Activated naive CD4-positive, alpha-beta T cell treated with anti-CD3 and anti-CD28 coated beads for 36 hours (primary cell): ENCODE measurements at regions of chr11 and their contacts with region 1.

Region 1: GRCh38 chr11:798093-798713 is at the start of gene SLC25A22:
- DNase-seq: peak; percentile 82
- H3K4me3 Mint-ChIP-seq: peak within 1 kb of the TSS; percentile 86
- H3K27ac Mint-ChIP-seq: peak within 1 kb of the TSS; percentile 37
- H3K4me1 Mint-ChIP-seq: peaks cover 15% of the 10 kb centered on the region
- H3K27me3 Mint-ChIP-seq: no peaks in the 10 kb centered on the region
- total RNA-seq, gene SLC25A22: 19.1 to 21.8 TPM

Region 2: GRCh38 chr11:313787-314547 is 484.2 kb before region 1 on chr11 and contains the start of gene IFITM1:
- CTCF ChIA-PET with region 1: no interaction called
- intact Hi-C with region 1: loop called (anchors 10 kb)
- DNase-seq: peak; percentile 77
- H3K4me3 Mint-ChIP-seq: peak within 1 kb of the TSS; percentile 93
- H3K27ac Mint-ChIP-seq: peak within 1 kb of the TSS; percentile 95
- H3K4me1 Mint-ChIP-seq: peaks cover 22% of the 10 kb centered on the region
- H3K27me3 Mint-ChIP-seq: no peaks in the 10 kb centered on the region
- total RNA-seq, gene IFITM1: 359 to 378 TPM

Region 3: DNA sequence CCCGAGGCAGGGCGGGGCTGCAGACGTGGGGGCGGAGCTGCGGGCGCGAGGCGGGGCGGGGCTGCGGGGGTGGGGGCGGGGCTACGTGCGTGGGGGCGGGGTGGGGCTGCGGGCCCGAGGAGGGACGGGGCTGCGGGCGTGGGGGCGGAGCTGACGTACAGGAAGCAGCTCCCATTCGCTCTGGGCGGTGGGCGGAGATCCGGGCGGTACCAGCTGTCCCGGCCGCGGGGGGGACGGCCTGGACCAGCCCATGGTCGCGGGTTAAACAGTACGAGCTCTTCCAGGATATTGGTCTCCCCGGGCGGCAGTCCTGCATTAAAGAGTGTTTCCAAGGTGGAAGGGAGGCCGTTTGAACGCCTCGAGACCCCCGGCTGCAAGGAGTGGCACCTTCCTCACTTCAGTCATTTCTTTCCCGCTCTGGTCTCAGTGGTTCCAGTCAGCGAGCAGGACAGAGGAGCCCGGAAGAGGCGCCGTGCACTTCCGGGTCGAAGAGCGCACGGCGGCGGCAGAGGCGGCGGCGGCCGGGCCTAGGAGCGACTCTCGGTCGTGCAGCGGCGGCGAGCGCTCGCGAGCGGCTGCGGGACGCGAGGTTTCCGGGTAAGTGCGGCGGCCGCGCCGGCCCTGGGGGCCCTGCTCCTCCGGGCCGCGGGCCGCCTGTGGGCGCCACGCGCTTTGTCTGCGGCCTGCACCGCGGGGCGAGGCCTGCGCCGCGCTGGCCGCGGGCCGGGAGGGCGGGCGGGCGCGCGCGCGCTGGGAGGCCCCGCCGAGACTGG is 222.0 kb before region 1 on chr11 and contains the start of gene PHRF1:
- CTCF ChIA-PET with region 1: no interaction called
- intact Hi-C with region 1: loop called (anchors 5 kb)
- DNase-seq: peak; percentile 96
- H3K4me3 Mint-ChIP-seq: peak within 1 kb of the TSS; percentile 88
- H3K27ac Mint-ChIP-seq: peak within 1 kb of the TSS; percentile 99
- H3K4me1 Mint-ChIP-seq: peaks cover 48% of the 10 kb centered on the region
- H3K27me3 Mint-ChIP-seq: peaks cover 6% of the 10 kb centered on the region
- total RNA-seq, gene PHRF1: 25.6 to 26.1 TPM

Region 4: DNA sequence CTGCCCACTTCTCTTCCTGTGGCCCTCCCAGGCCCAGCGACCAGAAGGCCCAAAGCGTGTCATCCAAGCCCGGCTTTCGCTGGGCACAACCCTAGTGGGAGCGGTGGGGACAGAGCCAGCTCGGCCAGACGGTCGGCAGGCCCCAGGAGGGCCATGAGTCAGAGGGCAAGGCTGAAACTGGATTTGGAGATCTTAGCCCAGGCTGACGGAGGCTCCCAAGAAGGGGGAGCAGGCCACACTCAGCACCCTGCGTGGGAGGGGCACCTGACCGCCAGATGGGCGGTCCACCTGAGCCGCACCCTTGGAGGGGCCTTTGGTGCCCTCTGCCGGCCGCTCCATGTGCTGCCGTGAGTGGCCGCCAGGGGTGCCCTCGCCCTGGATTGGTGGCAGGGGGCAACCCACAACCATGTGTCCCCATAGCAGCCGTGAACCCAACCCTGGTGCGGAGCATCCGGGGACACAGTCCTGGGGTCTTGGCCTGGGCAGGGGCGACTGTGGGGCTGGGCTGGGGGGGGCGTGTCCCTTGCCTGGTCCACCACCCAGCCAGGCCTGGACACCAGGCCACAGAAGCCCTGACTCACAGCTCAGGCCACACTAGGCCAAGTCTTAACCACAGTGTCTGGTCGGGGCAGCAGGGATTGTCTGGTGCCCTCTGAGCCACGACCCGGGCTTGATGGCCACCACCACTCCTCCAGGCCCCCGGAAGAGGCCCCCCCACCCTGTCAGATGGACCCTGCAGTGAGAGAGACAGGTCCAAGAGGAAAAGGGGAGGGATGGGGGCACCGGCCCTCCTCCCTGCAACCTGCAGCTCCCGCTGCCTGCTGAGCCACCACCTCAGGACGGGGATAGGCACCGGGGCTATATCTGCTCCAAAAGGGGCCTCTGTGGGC is 70.1 kb before region 1 on chr11:
- CTCF ChIA-PET with region 1: no interaction called
- intact Hi-C with region 1: loop called (anchors 1 kb)
- DNase-seq: peak; percentile 84
- H3K4me3 Mint-ChIP-seq: no peak overlapping the region
- H3K27ac Mint-ChIP-seq: no peak overlapping the region
- H3K4me1 Mint-ChIP-seq: peaks cover 5% of the 10 kb centered on the region
- H3K27me3 Mint-ChIP-seq: peaks cover 2% of the 10 kb centered on the region

Region 5: DNA sequence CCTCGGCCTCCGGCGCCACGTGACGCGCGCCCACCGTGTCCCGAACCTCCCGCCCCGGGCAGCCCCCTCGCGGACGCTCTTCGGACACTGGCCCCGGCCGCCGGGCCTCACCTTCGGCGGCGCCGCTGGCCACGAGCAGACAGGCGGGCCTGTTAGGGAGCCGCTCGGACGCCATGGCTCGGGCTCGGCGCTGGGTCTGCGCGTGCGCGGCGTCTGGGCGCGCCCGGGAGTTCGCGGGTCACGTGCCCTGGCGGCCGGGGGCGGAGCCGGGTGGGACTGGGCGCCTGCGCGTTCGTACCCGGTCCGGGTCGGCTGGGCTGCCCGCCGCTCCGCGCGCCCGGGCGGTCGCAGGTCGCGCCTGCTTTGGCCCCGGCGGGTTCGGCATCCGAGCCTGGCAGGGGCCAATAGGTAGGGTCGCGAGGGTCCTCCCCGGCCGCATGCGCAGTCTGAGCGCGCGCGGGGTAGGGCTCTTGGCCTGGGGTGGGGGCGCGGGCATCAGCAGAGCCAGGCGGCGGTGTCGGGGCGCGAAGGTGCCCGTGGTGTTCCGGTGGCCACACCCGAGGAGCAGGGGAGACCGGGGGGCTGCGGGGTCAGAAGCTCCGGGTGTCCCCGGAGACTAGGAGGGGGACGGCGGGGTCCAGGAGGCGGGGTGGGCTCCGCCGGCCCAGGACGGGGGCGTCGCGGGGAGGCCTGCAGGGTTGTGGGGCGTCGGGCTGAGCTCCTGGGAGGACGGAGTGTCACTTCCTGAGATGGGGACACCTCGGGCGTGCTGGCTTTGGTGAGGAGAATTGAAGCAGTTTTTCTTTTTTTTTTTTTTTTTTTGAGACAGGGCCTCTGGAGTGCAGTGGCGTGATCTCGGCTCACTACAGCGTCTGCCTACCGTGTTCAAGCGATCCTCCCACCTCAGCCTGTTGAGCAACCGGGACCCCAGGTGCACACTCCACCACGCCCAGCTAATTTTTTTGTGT is 20.6 kb before region 1 on chr11 and contains the start of gene GATD1:
- CTCF ChIA-PET with region 1: interaction called, 3 read pairs
- intact Hi-C with region 1: loop called (anchors 1 kb)
- DNase-seq: peak; percentile 93
- H3K4me3 Mint-ChIP-seq: peak within 1 kb of the TSS; percentile 87
- H3K27ac Mint-ChIP-seq: peak within 1 kb of the TSS; percentile 74
- H3K4me1 Mint-ChIP-seq: peaks cover 30% of the 10 kb centered on the region
- H3K27me3 Mint-ChIP-seq: no peaks in the 10 kb centered on the region
- total RNA-seq, gene GATD1: 33.0 to 34.3 TPM

Region 6: DNA sequence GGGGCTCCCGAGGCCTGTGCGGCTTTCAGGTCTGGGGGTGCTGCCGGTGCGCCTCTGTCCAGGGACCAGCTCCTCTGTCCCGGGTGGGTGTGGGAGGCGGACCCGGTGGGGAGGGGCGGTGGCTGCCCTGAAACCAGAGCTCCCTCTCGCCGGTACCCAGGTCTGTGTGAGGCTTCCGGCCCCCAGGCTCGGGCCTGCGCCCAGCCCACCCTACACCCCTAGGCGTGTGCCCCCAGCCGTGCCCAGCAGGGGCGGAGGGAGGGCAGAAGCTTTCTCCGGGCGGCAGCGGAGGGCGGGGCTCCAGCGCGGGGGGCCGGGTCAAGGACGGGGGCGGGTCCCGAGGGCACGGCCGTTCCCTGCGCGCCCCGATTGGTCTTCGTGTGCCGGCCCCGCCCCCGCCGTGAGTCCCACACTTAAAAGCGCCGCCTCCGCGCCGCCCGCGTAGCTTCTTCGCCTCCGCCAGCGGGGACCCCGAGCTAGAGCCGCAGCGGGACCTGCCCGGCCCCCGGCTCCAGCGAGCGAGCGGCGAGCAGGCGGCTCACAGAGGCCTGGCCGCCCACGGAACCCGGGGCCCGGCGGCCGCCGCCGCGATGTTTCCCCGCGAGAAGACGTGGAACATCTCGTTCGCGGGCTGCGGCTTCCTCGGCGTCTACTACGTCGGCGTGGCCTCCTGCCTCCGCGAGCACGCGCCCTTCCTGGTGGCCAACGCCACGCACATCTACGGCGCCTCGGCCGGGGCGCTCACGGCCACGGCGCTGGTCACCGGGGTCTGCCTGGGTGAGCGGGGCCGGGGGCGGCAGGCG is 21.1 kb after region 1 on chr11:
- CTCF ChIA-PET with region 1: no interaction called
- intact Hi-C with region 1: loop called (anchors 1 kb)
- DNase-seq: peak; percentile 89
- H3K4me3 Mint-ChIP-seq: peak overlapping the region; percentile 75
- H3K27ac Mint-ChIP-seq: no peak overlapping the region
- H3K4me1 Mint-ChIP-seq: peaks cover 13% of the 10 kb centered on the region
- H3K27me3 Mint-ChIP-seq: no peaks in the 10 kb centered on the region

Region 7: GRCh38 chr11:1202776-1203504 is 404.7 kb after region 1 on chr11:
- CTCF ChIA-PET with region 1: no interaction called
- intact Hi-C with region 1: no loop called
- DNase-seq: peak; percentile 68
- H3K4me3 Mint-ChIP-seq: no peak overlapping the region
- H3K27ac Mint-ChIP-seq: no peak overlapping the region
- H3K4me1 Mint-ChIP-seq: no peaks in the 10 kb centered on the region
- H3K27me3 Mint-ChIP-seq: no peaks in the 10 kb centered on the region